Sciatic nerve (tissue), 2 donors: ENCODE measurements at regions of chr20 and their contacts with region 1.

Region 1: DNA sequence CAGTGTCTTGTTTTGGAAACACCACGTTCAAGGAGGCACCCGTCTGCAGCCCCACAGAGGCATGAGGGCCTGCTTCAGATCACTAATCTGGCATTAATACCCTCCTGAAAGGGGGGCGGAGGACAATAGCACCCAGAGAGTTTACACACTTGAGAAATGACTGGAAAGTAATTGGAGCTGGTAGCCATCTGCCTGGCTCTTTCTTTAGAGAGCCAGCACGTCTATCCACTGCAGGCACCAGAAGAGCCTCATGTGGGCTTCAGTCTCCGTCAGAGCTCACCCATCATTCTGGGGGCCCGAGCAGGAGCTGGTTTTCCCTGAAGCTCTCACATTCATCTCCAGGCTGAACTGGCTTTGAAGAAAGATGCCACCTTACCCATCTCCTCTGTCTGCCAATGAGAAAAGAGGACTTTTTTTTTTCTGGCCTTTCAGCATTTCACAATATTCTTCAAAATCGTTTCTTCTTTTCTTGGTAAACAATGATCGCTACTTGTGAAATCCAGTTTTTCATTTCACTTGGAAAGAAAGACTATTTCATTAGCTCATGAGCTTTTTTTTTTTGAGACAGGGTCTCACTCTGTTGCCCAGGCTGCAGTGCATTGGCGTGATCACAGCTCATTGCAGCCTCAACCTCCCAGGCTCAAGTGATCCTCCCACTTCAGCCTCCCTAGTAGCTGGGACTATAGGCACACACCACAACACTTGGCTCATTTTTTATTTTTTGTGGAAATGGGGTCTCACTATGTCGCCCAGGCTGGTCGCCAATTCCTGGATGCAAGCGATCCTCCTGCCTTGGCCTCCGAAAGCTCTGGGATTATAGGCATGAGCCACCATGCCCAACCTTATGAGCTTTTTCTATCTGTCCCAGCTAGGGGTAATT is 124.7 kb upstream of the ZNF217 start:
- DNase-seq: no peak
- ATAC-seq: no peak

Region 2: DNA sequence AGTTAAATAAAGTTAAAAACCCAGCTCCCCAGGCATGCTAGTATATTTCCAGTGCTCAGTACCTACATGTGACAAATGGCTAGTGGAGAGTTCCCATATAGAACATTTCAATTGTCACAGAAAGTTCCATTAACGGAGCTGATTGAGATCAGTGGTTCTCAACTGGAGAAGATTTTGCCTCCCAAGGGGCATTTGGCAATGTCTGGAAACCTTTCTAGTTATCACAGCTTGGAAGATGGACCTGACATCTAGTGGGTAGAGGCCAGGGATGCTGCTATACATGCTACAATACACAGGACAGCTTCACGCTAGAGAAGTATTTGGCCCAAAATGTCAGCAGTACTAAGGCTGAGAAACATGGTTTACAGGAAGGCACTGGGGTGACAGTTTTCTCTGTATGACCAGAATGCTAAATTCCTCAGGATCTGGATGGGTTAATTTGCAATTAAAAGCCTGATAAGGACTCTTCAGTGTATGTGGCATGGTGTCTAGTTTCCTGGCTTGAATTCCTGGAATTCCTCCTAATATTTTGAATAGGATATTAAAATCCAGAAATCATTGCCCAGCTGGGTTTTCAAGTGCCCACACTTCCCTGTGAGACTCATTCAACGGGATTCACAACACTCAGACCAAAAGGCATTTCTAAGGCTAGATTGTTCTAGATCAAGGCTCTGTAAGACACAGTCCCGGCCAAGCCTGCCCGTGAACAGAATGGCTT is 1831.3 kb before region 1 on chr20:
- intact Hi-C with region 1: loop called (anchors 5 kb)
- DNase-seq: no peak
- ATAC-seq: no peak

Region 3: DNA sequence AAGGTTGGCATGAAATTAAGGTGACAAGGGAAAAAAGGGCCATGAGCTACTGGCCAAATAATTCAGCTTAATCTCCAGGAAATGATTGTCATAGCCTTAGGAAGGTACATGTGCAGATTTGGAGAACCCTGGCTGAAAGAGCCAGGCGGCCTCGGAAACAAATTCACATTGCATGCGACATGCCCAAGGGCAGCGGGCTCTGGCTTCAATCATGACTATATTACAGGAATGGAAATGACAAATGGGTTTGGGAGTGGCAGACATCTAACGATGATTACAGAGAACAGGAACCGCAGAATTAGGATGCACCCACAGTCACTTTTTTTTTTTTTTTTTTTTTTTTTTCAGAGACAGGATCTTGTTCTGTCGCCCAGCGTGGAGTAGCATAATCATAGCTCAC is 1803.6 kb before region 1 on chr20:
- intact Hi-C with region 1: no loop called
- DNase-seq: no peak
- ATAC-seq: no peak

Region 4: DNA sequence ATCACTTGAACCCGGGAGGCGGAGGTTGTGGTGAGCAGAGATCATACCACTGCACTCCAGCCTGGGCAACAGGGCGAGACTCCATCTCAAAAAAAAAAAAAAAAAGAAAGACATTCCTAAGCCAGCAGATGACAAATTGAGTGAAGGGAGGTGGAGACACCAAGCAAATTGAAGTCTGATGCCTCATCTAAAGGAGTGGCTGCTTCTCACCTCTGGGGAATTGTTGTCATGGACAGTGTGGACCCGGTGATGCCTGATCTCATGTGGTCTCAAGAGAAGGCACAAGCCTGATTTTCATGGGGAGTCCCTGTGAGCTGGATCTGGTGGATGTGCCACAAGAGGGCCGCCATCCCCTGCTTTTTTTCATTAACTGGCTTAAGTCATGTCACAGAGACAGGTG is 396.8 kb before region 1 on chr20:
- intact Hi-C with region 1: no loop called
- DNase-seq: no peak
- ATAC-seq: no peak